Heart right ventricle (tissue), 16 donors: ENCODE measurements at regions of chr9 and their contacts with region 1.

Region 1: DNA sequence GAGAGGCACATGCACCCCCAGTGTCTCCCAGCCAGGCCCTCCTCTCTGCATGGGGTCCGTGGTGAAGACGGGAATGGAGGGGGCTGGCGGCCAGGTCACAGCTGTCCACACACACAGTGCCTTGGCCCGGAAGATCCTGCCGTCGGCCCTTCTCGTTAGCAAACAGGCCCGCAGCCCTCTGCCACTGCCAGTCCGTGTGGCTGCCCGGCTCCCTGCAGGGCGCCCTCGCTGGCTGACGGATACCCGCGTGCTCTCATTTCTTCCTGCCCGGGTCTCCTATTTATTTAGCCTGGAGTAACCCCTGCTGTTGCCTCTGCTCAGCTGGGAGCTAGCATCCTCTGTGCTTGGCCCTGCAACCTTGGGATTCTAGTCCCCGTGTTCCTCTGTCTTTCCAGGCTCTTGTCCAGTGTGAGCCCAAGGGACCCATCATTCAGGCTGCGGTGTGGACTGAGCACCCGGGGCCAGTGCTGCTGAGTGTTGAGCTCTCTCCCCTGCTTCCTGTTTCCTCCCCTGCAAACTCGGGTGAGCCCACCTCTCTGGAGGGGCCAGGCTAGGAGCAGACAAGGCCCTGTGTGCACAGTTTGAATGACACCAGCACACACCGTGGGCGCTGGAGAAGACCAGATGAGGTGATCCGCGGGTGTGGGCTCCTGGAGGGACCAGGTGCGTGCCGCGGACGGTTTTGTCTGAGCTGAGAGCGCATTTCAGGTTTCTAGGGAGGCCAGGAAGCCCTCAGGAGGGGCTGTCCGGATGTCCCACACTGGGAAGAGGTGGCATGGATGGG is 14.6 kb upstream of the RNU6ATAC start:
- DNase-seq: peak in 1 of 2 donors; percentile 57
- ATAC-seq: peak; percentile 5 to 71 (median 46)
- H3K4me3 ChIP-seq: no peak overlapping the region
- H3K27ac ChIP-seq: peak overlapping the region in 1 of 10 donors; percentile 10
- H3K4me1 ChIP-seq: peaks cover 0 to 40% (median 27%) of the 10 kb centered on the region in 9 donors
- H3K27me3 ChIP-seq: peaks cover 0 to 38% (median 24%) of the 10 kb centered on the region in 7 donors
- CTCF ChIP-seq: no peak

Region 2: GRCh38 chr9:134210908-134211810 is 32.2 kb after region 1 on chr9:
- intact Hi-C with region 1: loop called in 6 of 10 experiments (anchors 5 kb)
- DNase-seq: peak; percentile 43 to 47
- ATAC-seq: peak; percentile 22 to 66 (median 38)
- H3K4me3 ChIP-seq: no peak overlapping the region
- H3K27ac ChIP-seq: peak overlapping the region; percentile 66 to 90 (median 71)
- H3K4me1 ChIP-seq: peaks cover 17 to 68% (median 38%) of the 10 kb centered on the region in 9 donors
- H3K27me3 ChIP-seq: no peaks in the 10 kb centered on the region
- CTCF ChIP-seq: no peak

Region 3: DNA sequence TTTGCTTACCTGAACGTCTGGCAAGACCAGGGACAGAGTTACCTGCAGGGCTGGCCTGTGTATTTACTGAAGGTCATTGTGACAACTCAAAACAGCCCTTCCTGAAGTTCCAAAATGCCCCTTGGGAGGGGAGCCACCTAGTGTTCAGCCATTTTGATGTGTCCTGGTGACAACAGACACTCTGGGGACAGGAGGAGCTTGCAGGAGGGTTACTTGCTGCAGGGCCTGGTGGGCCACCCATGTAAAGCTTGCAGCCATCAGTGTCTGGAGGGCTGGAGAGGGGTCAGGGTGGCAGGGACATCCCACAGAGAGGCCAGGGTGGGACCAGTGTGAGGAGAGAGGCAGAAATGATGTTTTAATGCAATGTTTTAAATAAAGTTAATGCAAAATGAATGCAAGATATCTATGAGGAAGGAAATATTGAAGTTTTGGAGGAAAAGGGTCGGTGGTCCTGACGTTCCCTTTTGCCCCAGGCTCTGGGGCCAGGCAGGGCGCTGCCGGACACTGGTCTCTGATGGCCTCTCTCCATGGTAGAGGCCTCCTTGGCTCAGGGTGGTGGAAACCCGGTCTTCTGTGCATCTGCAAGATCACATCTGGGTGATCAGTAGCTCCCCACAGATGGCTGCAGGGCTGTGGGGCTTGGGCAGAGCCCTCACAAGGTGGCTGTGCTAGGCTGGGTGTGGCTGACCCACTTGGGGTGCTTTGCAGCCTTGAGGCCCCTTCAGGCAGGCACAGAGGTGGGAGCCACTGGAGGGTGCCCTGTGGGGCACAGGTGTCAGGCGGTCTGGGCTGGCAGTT is 39.1 kb after region 1 on chr9:
- intact Hi-C with region 1: loop called in 6 of 10 experiments (anchors 5 kb)
- DNase-seq: peak in 1 of 2 donors; percentile 4
- ATAC-seq: no peak
- H3K4me3 ChIP-seq: no peak overlapping the region
- H3K27ac ChIP-seq: no peak overlapping the region
- H3K4me1 ChIP-seq: peaks cover 6 to 34% (median 24%) of the 10 kb centered on the region in 9 donors
- H3K27me3 ChIP-seq: no peaks in the 10 kb centered on the region
- CTCF ChIP-seq: peak in 7 of 9 donors; percentile 14 to 38 (median 26)

Region 4: GRCh38 chr9:134283111-134283515 is 104.2 kb after region 1 on chr9:
- intact Hi-C with region 1: loop called in 2 of 10 experiments (anchors 10 kb)
- DNase-seq: peak; percentile 40 to 82
- ATAC-seq: peak; percentile 53 to 83 (median 74)
- H3K4me3 ChIP-seq: no peak overlapping the region
- H3K27ac ChIP-seq: peak overlapping the region in 6 of 10 donors; percentile 36 to 81 (median 67)
- H3K4me1 ChIP-seq: peaks cover 6 to 22% (median 11%) of the 10 kb centered on the region in 9 donors
- H3K27me3 ChIP-seq: peaks cover 0 to 14% (median 0%) of the 10 kb centered on the region in 7 donors
- CTCF ChIP-seq: no peak

Region 5: GRCh38 chr9:134293611-134294165 is 114.7 kb after region 1 on chr9:
- intact Hi-C with region 1: loop called in 4 of 10 experiments (anchors 10 kb)
- DNase-seq: peak in 1 of 2 donors; percentile 31
- ATAC-seq: peak in 5 of 8 donors; percentile 32 to 63 (median 40)
- H3K4me3 ChIP-seq: peak overlapping the region in 9 of 10 donors; percentile 7 to 47 (median 37)
- H3K27ac ChIP-seq: peak overlapping the region in 4 of 10 donors; percentile 14 to 41 (median 38)
- H3K4me1 ChIP-seq: peaks cover 5 to 20% (median 16%) of the 10 kb centered on the region in 9 donors
- H3K27me3 ChIP-seq: peaks cover 0 to 6% (median 0%) of the 10 kb centered on the region in 7 donors
- CTCF ChIP-seq: no peak

Region 6: DNA sequence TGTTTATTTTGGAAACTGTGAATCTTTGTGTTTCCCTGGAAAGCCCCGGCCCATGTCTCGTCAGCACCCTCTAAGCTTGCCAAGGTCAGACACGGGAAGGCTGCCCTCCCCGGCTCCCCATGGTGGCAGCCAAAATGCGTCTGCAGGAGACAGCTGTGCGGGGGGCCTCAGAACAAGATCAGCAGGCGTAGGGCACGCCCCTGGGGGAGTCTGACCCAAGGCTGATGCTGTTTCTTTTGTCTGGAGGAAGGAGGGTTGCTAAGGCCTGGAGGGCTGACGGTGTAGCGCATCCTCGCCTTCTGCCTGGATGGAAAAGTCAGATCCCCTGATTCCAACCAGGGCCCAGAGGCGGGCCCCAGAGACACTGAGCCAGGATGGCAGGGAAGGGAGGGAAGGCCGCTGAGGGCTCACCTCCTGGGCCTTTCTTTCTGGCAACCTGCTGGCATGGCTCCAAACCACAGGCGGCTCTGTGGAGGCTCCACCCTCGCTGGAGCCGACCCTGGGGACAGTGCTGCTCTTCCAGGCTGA is 965.7 kb after region 1 on chr9:
- intact Hi-C with region 1: no loop called
- DNase-seq: no peak
- ATAC-seq: peak in 1 of 8 donors; percentile 29
- H3K4me3 ChIP-seq: no peak overlapping the region
- H3K27ac ChIP-seq: no peak overlapping the region
- H3K4me1 ChIP-seq: peaks cover 0 to 4% (median 0%) of the 10 kb centered on the region in 9 donors
- H3K27me3 ChIP-seq: peaks cover 4 to 66% (median 49%) of the 10 kb centered on the region in 7 donors
- CTCF ChIP-seq: no peak